MCF 10A (cell line): ENCODE measurements at regions of chr6 and their contacts with region 1.

Region 1: GRCh38 chr6:42901536-42901957 is 14.3 kb upstream of the PTCRA start:
- DNase-seq: peak; percentile 92
- H3K4me3 Mint-ChIP-seq: no peak overlapping the region
- H3K27ac Mint-ChIP-seq: no peak overlapping the region
- H3K4me1 Mint-ChIP-seq: peaks cover 14% of the 10 kb centered on the region
- H3K27me3 Mint-ChIP-seq: no peaks in the 10 kb centered on the region
- CTCF ChIP-seq: peak; percentile 89

Region 2: DNA sequence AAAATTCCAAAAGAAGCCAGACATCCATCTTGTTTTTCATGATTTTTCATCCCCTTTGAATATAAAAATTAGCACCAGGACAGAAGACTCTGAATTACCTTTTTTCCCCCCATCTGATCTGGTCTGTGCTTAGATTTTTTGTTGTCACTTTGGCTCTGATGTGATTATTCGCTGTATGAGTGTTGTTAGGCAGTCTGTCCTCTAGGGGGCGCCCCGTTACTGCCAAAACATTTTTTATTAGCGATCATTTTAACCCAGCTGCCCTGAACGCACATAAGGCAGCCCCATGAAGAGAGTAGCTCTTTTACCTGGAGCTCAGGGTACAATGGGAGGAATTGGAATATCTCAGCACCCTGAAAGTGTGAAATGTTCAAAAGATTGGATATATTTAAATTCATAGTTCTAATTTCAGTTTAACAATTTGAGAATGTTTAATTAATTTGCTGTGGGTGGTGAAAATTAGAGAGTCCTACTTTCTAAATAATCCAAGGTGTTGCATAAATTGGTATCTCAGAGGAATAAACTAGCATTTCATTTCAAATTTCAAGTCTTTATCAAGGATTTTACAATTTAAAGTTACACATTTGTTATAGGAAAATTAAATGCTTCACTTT is 239.9 kb before region 1 on chr6:
- CTCF ChIA-PET with region 1: interaction called, 6 read pairs
- POLR2A ChIA-PET with region 1: interaction called, 3 read pairs
- intact Hi-C with region 1: loop called (anchors 1 kb)
- DNase-seq: peak; percentile 82
- H3K4me3 Mint-ChIP-seq: no peak overlapping the region
- H3K27ac Mint-ChIP-seq: no peak overlapping the region
- H3K4me1 Mint-ChIP-seq: no peaks in the 10 kb centered on the region
- H3K27me3 Mint-ChIP-seq: no peaks in the 10 kb centered on the region
- CTCF ChIP-seq: peak; percentile 78

Region 3: GRCh38 chr6:42928986-42929820 is 27.7 kb after region 1 on chr6 and contains the start of gene CNPY3:
- CTCF ChIA-PET with region 1: interaction called, 8 read pairs
- POLR2A ChIA-PET with region 1: interaction called, 10 read pairs
- intact Hi-C with region 1: no loop called
- DNase-seq: peak; percentile 97
- H3K4me3 Mint-ChIP-seq: peak within 1 kb of the TSS; percentile 99
- H3K27ac Mint-ChIP-seq: peak within 1 kb of the TSS; percentile 97
- H3K4me1 Mint-ChIP-seq: peaks cover 40% of the 10 kb centered on the region
- H3K27me3 Mint-ChIP-seq: no peaks in the 10 kb centered on the region
- CTCF ChIP-seq: no peak
- total RNA-seq, gene CNPY3: 21.9 and 22.5 TPM in 2 replicates

Region 4: DNA sequence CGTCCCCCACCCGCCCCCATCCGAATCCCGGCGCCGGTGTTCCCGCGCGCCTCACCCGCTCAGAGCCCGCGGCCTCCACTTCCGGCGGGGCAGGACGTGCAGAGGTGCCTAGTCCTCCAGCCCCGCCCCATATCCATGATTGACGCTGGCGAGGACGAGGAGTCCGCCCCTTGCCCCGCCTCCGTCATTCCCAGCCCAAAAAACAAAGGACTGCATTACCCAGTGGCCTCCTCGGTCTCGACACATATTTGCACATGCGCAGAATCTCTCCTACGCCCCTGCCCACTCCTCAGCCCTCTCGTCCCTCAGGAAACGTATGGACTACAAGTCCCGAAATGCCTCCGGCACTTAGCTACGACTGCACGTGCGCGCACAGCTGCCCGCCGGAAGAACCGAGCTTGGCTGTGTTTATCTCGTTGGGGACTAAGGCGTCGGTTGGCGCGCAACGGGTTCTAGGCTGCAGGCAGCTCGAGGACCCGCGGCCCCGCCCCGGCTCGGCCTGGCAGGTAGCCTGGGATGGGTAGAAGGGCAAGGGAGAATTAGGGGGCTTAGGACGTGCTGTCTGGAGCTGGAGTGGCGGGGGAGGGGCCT is 112.4 kb after region 1 on chr6 and contains the starts of genes KLHDC3 and MEA1:
- CTCF ChIA-PET with region 1: interaction called, 12 read pairs
- POLR2A ChIA-PET with region 1: no interaction called
- intact Hi-C with region 1: no loop called
- DNase-seq: peak; percentile 100
- H3K4me3 Mint-ChIP-seq: peak within 1 kb of the TSS; percentile 99
- H3K27ac Mint-ChIP-seq: peak within 1 kb of the TSS; percentile 99
- H3K4me1 Mint-ChIP-seq: peaks cover 32% of the 10 kb centered on the region
- H3K27me3 Mint-ChIP-seq: no peaks in the 10 kb centered on the region
- CTCF ChIP-seq: no peak
- total RNA-seq, gene KLHDC3: 35.6 and 39.2 TPM in 2 replicates
- total RNA-seq, gene MEA1: 71.8 and 79.9 TPM in 2 replicates

Region 5: GRCh38 chr6:43129434-43130194 is 228.1 kb after region 1 on chr6:
- CTCF ChIA-PET with region 1: interaction called, 4 read pairs
- POLR2A ChIA-PET with region 1: no interaction called
- intact Hi-C with region 1: loop called (anchors 1 kb)
- DNase-seq: peak; percentile 65
- H3K4me3 Mint-ChIP-seq: no peak overlapping the region
- H3K27ac Mint-ChIP-seq: peak overlapping the region; percentile 57
- H3K4me1 Mint-ChIP-seq: peaks cover 24% of the 10 kb centered on the region
- H3K27me3 Mint-ChIP-seq: no peaks in the 10 kb centered on the region
- CTCF ChIP-seq: peak; percentile 68

Region 6: DNA sequence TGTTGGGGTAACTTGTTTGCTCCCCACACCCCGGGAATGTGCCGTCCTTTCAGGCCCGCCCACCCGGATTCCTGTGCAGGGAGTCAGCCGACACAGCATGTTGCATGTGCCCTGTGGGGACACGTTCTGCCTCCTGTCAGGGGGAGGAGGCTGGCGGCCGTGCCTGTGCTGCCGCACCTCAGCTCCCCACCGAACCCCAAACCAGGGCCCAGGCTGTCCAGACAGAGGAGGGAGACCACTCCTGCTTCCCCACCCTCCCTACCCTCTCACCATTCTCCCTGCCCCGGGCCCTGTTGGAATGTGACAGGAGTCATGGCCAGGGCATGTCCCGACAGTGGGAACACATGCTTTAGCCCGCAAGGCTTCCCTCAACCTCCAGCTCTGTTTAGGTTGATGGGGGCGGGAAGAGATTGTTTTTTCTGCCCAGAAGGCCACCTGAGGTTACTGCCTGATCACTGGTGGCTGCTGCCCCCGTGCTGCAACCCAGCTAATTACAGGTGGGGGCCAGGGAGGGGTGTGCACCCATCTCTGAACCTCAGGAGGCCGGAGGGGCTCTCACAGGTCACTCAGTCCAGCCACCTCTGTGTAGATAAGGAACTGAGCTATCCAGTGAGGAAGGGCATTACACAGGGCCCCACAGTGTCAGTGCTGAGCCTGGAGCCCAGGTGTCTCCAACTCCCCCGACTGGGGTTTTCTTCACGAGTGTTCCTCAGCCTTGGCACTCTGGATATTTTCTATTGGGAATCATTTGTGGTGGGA is 595.0 kb after region 1 on chr6:
- CTCF ChIA-PET with region 1: no interaction called
- POLR2A ChIA-PET with region 1: no interaction called
- intact Hi-C with region 1: loop called (anchors 5 kb)
- DNase-seq: peak; percentile 88
- H3K4me3 Mint-ChIP-seq: peak overlapping the region; percentile 43
- H3K27ac Mint-ChIP-seq: peak overlapping the region; percentile 88
- H3K4me1 Mint-ChIP-seq: peaks cover 53% of the 10 kb centered on the region
- H3K27me3 Mint-ChIP-seq: no peaks in the 10 kb centered on the region
- CTCF ChIP-seq: peak; percentile 91